SK-N-SH (cell line): ENCODE measurements at regions of chr9 and their contacts with region 1.

Region 1: DNA sequence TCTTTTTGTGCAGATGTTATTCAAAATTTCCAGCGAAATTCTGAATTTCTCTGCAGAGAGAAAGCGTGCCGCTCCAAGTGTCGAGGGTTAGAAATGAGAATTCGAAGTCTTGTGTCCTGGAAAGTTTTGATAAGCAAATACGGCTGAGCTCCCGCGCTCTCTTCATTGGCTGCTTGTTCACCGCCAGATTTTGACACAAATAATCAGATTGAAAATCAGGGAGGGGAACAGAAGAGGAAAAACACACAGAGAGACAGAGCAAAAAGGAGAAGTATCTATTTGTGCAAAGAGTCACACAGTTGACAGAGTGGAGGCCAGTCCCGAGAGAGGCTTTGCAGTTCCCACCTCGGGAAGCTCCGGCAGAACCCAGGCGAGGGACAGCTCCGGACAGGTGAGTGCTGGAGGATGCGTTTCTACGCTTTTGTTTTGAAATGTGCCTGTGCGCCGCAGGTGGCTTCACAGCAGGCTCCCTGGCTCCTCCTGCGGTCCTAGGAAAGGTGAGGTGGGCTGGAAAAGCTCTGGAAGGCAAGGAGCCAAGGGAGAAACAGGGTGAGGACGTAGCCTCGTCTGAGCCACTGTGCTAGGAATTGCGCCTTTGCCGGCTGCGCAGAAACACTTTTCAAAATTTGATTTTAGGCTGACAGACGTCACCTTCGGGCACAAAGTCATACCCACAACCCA is at the start of gene GFI1B:
- DNase-seq: peak; percentile 16
- H3K4me3 ChIP-seq: no peak within 1 kb of the TSS; a peak in 2 of 4 replicates
- H3K27ac ChIP-seq: no peak within 1 kb of the TSS
- H3K4me1 ChIP-seq: peaks cover 0 to 7% of the 10 kb centered on the region in 2 experiments; a peak in 1 of 4 replicates
- H3K27me3 ChIP-seq: peaks cover 70% of the 10 kb centered on the region
- CTCF ChIP-seq: no peak
- EP300 ChIP-seq: no peak
- RAD21 ChIP-seq: no peak
- polyA plus RNA-seq, gene GFI1B: 0.03 TPM in 1 of 2 replicates, not detected in the other

Region 2: GRCh38 chr9:132840980-132841379 is 137.6 kb before region 1 on chr9:
- CTCF ChIA-PET with region 1: no interaction called
- POLR2A ChIA-PET with region 1: no interaction called
- DNase-seq: peak; percentile 64
- H3K4me3 ChIP-seq: no peak overlapping the region
- H3K27ac ChIP-seq: peak overlapping the region in 1 of 2 experiments; percentile 59; a peak in 2 of 4 replicates
- H3K4me1 ChIP-seq: peaks cover 0 to 8% of the 10 kb centered on the region in 2 experiments; a peak in 1 of 4 replicates
- H3K27me3 ChIP-seq: no peaks in the 10 kb centered on the region
- CTCF ChIP-seq: no peak
- EP300 ChIP-seq: no peak
- RAD21 ChIP-seq: no peak

Region 3: GRCh38 chr9:132944302-132945185 is 34.0 kb before region 1 on chr9 and contains the start of gene TSC1:
- CTCF ChIA-PET with region 1: interaction called, 17 read pairs
- POLR2A ChIA-PET with region 1: no interaction called
- DNase-seq: peak; percentile 97
- H3K4me3 ChIP-seq: peak within 1 kb of the TSS; percentile 84 to 97
- H3K27ac ChIP-seq: peak within 1 kb of the TSS; percentile 96 to 98
- H3K4me1 ChIP-seq: peaks cover 15 to 27% of the 10 kb centered on the region in 2 experiments
- H3K27me3 ChIP-seq: no peaks in the 10 kb centered on the region
- CTCF ChIP-seq: no peak
- EP300 ChIP-seq: no peak
- RAD21 ChIP-seq: no peak
- polyA plus RNA-seq, gene TSC1: 18.3 and 27.6 TPM in 2 replicates

Region 4: GRCh38 chr9:132961002-132961401 is 17.6 kb before region 1 on chr9:
- CTCF ChIA-PET with region 1: interaction called, 11 read pairs
- POLR2A ChIA-PET with region 1: no interaction called
- DNase-seq: no peak
- H3K4me3 ChIP-seq: no peak overlapping the region
- H3K27ac ChIP-seq: no peak overlapping the region
- H3K4me1 ChIP-seq: no peaks in the 10 kb centered on the region
- H3K27me3 ChIP-seq: peaks cover 6% of the 10 kb centered on the region; the same call in 1 of the 2 replicates
- CTCF ChIP-seq: no peak
- EP300 ChIP-seq: no peak
- RAD21 ChIP-seq: no peak

Region 5: DNA sequence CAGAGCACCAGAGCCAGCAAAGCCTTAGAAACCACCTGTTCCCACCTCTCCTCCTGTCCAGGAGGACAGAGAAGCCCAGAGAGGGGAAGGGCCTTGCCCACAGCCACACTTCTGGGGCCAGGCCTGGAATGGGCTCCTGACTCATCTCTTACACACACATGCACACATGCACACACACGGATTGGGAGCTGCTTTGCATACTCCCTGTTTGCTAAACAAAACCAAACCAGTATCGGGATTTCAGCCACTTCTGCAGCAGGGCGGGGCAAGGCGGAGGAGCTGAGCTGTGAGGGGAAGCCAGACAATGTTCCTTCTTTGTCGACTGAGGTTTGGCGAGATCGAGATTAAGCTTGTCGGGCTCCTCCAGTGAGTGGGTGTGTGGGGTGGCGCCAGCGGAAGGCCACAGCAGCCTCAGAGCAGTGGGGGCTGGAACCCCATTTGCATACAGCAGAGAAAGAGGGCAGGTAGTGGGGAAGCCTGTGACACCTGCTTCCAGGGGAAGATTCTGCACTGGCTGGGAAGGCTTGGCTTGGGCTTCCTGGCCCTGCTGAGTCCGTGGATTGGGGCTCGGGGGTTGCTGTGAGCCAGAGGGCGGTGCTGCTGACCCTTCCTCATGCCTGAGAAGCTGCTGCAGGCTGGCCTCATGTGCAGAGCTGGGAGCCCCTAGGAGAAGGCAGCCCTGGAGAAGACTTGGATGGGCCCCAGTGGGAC is 16.0 kb after region 1 on chr9:
- CTCF ChIA-PET with region 1: interaction called, 14 read pairs
- POLR2A ChIA-PET with region 1: no interaction called
- DNase-seq: peak; percentile 8
- H3K4me3 ChIP-seq: no peak overlapping the region
- H3K27ac ChIP-seq: no peak overlapping the region
- H3K4me1 ChIP-seq: no peaks in the 10 kb centered on the region; a peak in 1 of 4 replicates
- H3K27me3 ChIP-seq: peaks cover 48% of the 10 kb centered on the region
- CTCF ChIP-seq: no peak
- EP300 ChIP-seq: no peak
- RAD21 ChIP-seq: no peak

Region 6: GRCh38 chr9:133004091-133004998 is 25.8 kb after region 1 on chr9:
- CTCF ChIA-PET with region 1: interaction called, 16 read pairs
- POLR2A ChIA-PET with region 1: no interaction called
- DNase-seq: peak; percentile 20
- H3K4me3 ChIP-seq: no peak overlapping the region
- H3K27ac ChIP-seq: no peak overlapping the region
- H3K4me1 ChIP-seq: no peaks in the 10 kb centered on the region; a peak in 1 of 4 replicates
- H3K27me3 ChIP-seq: peaks cover 18% of the 10 kb centered on the region; the same call in 1 of the 2 replicates
- CTCF ChIP-seq: no peak
- EP300 ChIP-seq: no peak
- RAD21 ChIP-seq: no peak